ENCODE measurements at regions of chr14 and their contacts with region 1.

Region 1: DNA sequence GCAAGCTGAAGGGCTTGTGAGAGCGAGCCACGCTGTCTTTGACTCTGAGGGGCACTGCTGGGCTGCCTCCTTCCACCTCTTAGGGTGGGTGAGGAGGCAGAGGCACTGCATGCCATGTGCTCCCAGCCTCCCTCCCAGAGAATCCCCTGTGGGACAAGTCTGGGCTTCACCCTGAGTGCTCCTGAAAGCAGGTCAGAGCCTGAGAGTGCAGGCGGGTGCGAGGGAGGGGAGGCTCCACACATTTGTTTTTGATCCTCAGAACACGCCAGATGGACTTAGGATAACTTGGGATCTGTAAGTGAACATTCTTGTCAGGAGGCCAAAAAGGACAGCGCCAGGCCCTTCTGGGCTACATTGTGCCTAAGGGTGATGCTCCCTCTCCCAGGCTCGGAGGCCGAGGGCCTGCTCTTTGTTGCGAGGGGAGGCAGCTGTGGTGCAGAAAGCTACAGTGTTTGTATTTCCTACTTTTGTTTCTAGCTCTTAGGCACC is 155.4 kb downstream of the TMX1 start:
- DNase-seq: peak; percentile 89
- ATAC-seq: peak; percentile 61
- H3K4me3 ChIP-seq: no peak overlapping the region
- H3K27ac ChIP-seq: peak overlapping the region; percentile 91
- H3K4me1 ChIP-seq: peaks cover 27% of the 10 kb centered on the region
- H3K27me3 ChIP-seq: no peaks in the 10 kb centered on the region
- CTCF ChIP-seq: 0 out of 2 replicates have a peak, but pooled peaks have one; percentile 19
- POLR2A ChIP-seq: no peak
- RAD21 ChIP-seq: peak; percentile 28; the same call in 1 of the 2 replicates

Region 2: GRCh38 chr14:51442513-51443175 is 47.2 kb after region 1 on chr14:
- CTCF ChIA-PET with region 1: no interaction called
- POLR2A ChIA-PET with region 1: interaction called, 5 read pairs
- dilution Hi-C with region 1: no loop called
- in situ Hi-C with region 1: no loop called
- intact Hi-C with region 1: loop called (anchors 1 kb)
- DNase-seq: peak; percentile 99
- ATAC-seq: peak; percentile 87
- H3K4me3 ChIP-seq: no peak overlapping the region
- H3K27ac ChIP-seq: peak overlapping the region; percentile 88
- H3K4me1 ChIP-seq: peaks cover 17% of the 10 kb centered on the region
- H3K27me3 ChIP-seq: no peaks in the 10 kb centered on the region
- CTCF ChIP-seq: no peak
- POLR2A ChIP-seq: no peak
- RAD21 ChIP-seq: peak; percentile 29; the same call in 1 of the 2 replicates

Region 3: GRCh38 chr14:51547260-51547659 is 151.9 kb after region 1 on chr14:
- CTCF ChIA-PET with region 1: no interaction called
- POLR2A ChIA-PET with region 1: no interaction called
- dilution Hi-C with region 1: no loop called
- in situ Hi-C with region 1: no loop called
- intact Hi-C with region 1: loop called (anchors 1 kb)
- DNase-seq: peak; percentile 100
- ATAC-seq: peak; percentile 93
- H3K4me3 ChIP-seq: no peak overlapping the region
- H3K27ac ChIP-seq: no peak overlapping the region
- H3K4me1 ChIP-seq: peaks cover 17% of the 10 kb centered on the region
- H3K27me3 ChIP-seq: no peaks in the 10 kb centered on the region
- CTCF ChIP-seq: no peak
- POLR2A ChIP-seq: peak; percentile 31; the same call in 1 of the 2 replicates
- RAD21 ChIP-seq: no peak; the same call in 1 of the 2 replicates

Region 4: DNA sequence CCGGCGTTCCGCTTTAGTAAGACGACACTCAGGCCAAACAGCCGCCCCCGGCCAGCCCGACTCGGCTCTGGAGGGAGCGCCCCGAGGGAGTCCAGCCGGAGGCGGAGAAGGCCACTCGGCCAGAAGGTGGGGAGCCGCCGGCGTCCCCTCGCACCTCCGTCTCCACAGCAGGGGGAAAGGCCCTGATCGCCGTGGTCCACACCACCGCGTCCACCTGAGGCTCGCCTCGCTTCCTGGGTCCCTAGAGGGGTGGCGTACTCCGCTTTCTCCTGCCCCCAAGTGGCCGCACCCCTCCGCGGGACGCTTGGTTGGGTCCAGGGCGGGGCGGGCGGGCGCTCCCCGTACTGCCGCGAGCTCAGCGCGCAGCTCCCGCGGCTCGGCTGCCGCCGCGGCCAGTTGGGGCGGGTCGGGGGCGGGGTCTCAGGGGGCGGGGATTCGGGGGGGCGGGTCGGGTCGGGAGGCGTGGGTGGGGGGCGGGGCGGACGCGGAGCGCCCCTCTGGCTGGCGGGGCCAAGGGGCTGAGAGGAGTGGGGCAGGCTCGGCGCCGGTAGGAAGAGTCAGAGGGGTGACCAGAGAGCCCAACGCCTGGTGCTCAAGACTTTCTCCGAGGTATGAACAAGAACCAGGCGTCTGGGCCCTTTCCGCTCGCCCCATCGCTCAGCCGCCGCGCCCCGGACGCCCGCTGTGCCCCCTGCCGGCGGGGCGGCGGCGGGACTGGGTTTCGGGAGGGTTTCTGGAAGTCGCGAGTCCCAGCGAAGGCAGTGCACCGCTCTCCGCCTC is 256.2 kb after region 1 on chr14 and contains the start of gene FRMD6:
- CTCF ChIA-PET with region 1: no interaction called
- POLR2A ChIA-PET with region 1: no interaction called
- dilution Hi-C with region 1: no loop called
- in situ Hi-C with region 1: no loop called
- intact Hi-C with region 1: loop called (anchors 1 kb)
- DNase-seq: peak; percentile 90
- ATAC-seq: peak; percentile 85
- H3K4me3 ChIP-seq: peak within 1 kb of the TSS; percentile 79
- H3K27ac ChIP-seq: peak within 1 kb of the TSS; percentile 99
- H3K4me1 ChIP-seq: no peaks in the 10 kb centered on the region
- H3K27me3 ChIP-seq: no peaks in the 10 kb centered on the region
- CTCF ChIP-seq: peak; percentile 80
- POLR2A ChIP-seq: peak; percentile 91
- RAD21 ChIP-seq: peak; percentile 70
- total RNA-seq, gene FRMD6: 620 and 682 TPM in 2 replicates

Measured in IMR-90 (cell line).